ENCODE measurements at regions of chr10 and their contacts with region 1.

Region 1: GRCh38 chr10:50990568-50991185 is 83.6 kb upstream of the PRKG1 start:
- DNase-seq: peak; percentile 80 to 82
- H3K4me3 ChIP-seq: peak overlapping the region; percentile 87 to 92
- H3K27ac ChIP-seq: peak overlapping the region; percentile 95 to 96
- H3K4me1 ChIP-seq: peaks cover 0 to 32% (median 0%) of the 10 kb centered on the region in 4 donors
- H3K27me3 ChIP-seq: no peaks in the 10 kb centered on the region
- CTCF ChIP-seq: no peak

Region 2: GRCh38 chr10:50739618-50740292 is 250.9 kb before region 1 on chr10 and contains the start of gene ASAH2B:
- intact Hi-C with region 1: no loop called
- DNase-seq: peak; percentile 60 to 85
- H3K4me3 ChIP-seq: peak within 1 kb of the TSS; percentile 66 to 73
- H3K27ac ChIP-seq: peak within 1 kb of the TSS; percentile 76 to 80
- H3K4me1 ChIP-seq: peaks cover 0 to 12% (median 0%) of the 10 kb centered on the region in 4 donors
- H3K27me3 ChIP-seq: no peaks in the 10 kb centered on the region
- CTCF ChIP-seq: no peak

Region 3: GRCh38 chr10:50941629-50942028 is 49.0 kb before region 1 on chr10:
- intact Hi-C with region 1: loop called (anchors 2 kb)
- DNase-seq: no peak
- H3K4me3 ChIP-seq: no peak overlapping the region
- H3K27ac ChIP-seq: no peak overlapping the region
- H3K4me1 ChIP-seq: no peaks in the 10 kb centered on the region
- H3K27me3 ChIP-seq: peaks cover 0 to 8% of the 10 kb centered on the region in 2 donors
- CTCF ChIP-seq: no peak

Region 4: GRCh38 chr10:51552879-51553278 is 562.2 kb after region 1 on chr10:
- intact Hi-C with region 1: no loop called
- DNase-seq: no peak
- H3K4me3 ChIP-seq: no peak overlapping the region
- H3K27ac ChIP-seq: no peak overlapping the region
- H3K4me1 ChIP-seq: peaks cover 0 to 40% (median 4%) of the 10 kb centered on the region in 4 donors
- H3K27me3 ChIP-seq: no peaks in the 10 kb centered on the region
- CTCF ChIP-seq: no peak

Region 5: DNA sequence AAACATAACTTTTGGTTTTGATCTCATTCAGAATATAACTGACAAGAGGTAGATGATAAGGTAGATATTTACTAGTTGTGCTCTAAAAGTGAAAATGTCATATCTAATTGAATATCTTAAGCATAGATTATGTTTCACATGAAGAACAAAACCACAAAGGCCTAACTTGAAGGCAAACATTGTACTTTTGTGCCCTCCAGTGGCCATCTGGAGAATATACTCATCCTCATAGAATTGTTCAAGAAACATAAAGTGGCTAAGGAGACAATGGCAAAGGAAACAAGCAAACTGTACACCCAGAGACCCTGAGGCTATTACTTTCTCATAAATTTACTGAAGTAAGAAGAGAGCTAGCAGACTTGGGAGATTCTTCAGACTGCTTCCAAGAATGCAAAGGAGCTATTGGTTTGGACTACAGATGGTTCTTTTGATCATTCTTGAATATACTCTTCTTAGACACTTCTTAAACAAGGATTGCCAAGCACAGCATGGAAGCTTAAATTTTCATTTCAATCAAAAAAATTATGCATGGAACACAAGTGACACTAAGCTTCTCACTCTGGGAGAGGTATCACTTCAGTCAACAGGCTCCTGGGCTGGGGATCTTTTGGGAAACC is 1225.2 kb after region 1 on chr10:
- intact Hi-C with region 1: loop called (anchors 10 kb)
- DNase-seq: no peak
- H3K4me3 ChIP-seq: no peak overlapping the region
- H3K27ac ChIP-seq: peak overlapping the region in 1 of 2 donors; percentile 11
- H3K4me1 ChIP-seq: peaks cover 0 to 34% (median 4%) of the 10 kb centered on the region in 4 donors
- H3K27me3 ChIP-seq: no peaks in the 10 kb centered on the region
- CTCF ChIP-seq: peak; percentile 74 to 85